Dendritic cell treated with granulocyte-macrophage colony-stimulating factor and Interleukin-4, amounts not matched to agents 40 ng/mL and 50 ng/mL, for 4 days (primary cell): ENCODE measurements at regions of chr2 and their contacts with region 1.

Region 1: GRCh38 chr2:168346725-168347477 is 99.5 kb upstream of the STK39 start:
- H3K4me3 Mint-ChIP-seq: peak overlapping the region; percentile 87
- H3K27ac Mint-ChIP-seq: peak overlapping the region; percentile 78
- H3K4me1 Mint-ChIP-seq: peaks cover 13% of the 10 kb centered on the region
- H3K27me3 Mint-ChIP-seq: no peaks in the 10 kb centered on the region

Region 2: GRCh38 chr2:168254158-168254935 is 92.6 kb before region 1 on chr2:
- intact Hi-C with region 1: no loop called
- H3K4me3 Mint-ChIP-seq: no peak overlapping the region
- H3K27ac Mint-ChIP-seq: no peak overlapping the region
- H3K4me1 Mint-ChIP-seq: no peaks in the 10 kb centered on the region
- H3K27me3 Mint-ChIP-seq: no peaks in the 10 kb centered on the region

Region 3: GRCh38 chr2:168687314-168687713 is 340.4 kb after region 1 on chr2:
- intact Hi-C with region 1: loop called (anchors 2 kb)
- H3K4me3 Mint-ChIP-seq: no peak overlapping the region
- H3K27ac Mint-ChIP-seq: no peak overlapping the region
- H3K4me1 Mint-ChIP-seq: peaks cover 21% of the 10 kb centered on the region
- H3K27me3 Mint-ChIP-seq: no peaks in the 10 kb centered on the region

Region 4: GRCh38 chr2:168705534-168706470 is 358.9 kb after region 1 on chr2:
- intact Hi-C with region 1: loop called (anchors 2 kb)
- H3K4me3 Mint-ChIP-seq: no peak overlapping the region
- H3K27ac Mint-ChIP-seq: peak overlapping the region; percentile 19
- H3K4me1 Mint-ChIP-seq: no peaks in the 10 kb centered on the region
- H3K27me3 Mint-ChIP-seq: no peaks in the 10 kb centered on the region

Region 5: DNA sequence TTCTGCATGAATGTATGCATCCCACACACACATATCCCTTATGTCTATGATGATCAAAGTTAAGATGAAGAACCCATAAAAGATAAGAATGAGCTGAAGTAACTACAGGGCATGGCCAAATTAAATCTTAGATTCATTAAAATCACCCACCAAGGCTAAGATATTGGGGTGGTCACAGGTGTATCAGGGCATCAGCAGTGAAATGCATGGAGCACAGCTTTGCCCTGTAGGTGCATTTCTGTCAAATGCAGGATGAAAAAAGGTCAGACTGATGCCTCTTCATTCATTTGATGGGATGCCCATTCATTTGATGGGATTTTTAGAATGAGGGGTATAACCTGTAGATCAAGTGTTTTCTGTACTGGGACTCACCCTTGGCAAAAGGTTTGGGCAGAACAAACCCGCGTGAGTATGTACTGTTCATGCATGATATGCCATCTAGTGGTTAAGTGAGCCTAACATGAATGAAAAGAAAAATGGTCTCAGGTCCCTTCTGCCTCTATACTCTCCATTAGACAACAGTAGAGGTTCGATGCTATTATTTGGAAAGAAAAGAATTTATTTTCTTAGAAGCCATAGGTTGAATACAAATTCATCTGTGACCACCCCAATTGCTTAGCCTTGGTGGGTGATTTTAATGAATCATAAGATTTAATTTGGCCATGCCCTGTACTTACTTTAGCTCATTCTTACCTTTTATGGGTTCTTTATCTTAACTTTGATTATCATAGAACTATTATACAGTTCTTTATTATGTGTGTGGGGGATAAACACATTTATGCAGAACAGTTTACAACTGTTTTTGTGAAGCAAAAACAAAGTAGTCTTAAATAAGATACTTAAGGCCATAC is 412.3 kb after region 1 on chr2:
- intact Hi-C with region 1: loop called (anchors 1 kb)
- H3K4me3 Mint-ChIP-seq: no peak overlapping the region
- H3K27ac Mint-ChIP-seq: no peak overlapping the region
- H3K4me1 Mint-ChIP-seq: peaks cover 13% of the 10 kb centered on the region
- H3K27me3 Mint-ChIP-seq: no peaks in the 10 kb centered on the region

Region 6: DNA sequence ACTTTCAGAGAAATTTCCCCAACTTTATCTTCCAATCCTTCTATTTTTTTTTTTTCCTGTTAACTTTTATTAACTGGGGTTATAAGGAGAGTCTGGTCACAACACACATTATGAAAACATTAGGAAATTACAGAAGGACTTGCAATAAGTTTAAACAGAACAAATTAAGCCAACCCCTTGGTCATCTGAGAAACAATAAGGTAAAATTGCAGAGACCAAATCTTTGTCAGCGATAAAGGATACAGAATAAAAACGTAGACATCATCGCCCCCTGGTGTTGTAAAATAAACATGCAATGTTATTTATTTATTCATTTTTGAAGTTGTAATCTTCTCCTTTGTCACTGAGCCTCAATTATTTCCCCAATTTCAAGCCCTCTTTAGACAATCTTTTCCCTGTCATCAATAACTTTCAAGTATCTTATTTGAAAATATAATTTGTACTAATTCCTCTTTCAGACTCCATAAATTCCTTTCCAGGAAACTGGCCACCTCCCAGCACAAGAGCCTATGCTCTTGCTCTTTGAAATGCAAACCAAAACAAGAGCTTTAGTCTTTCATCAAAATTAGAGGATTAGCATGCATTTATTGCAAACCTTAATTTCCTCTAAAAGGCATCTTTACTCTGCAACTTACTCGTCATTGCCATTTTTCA is 573.7 kb after region 1 on chr2:
- intact Hi-C with region 1: loop called (anchors 1 kb)
- H3K4me3 Mint-ChIP-seq: no peak overlapping the region
- H3K27ac Mint-ChIP-seq: no peak overlapping the region
- H3K4me1 Mint-ChIP-seq: no peaks in the 10 kb centered on the region
- H3K27me3 Mint-ChIP-seq: no peaks in the 10 kb centered on the region